ENCODE measurements at regions of chr22 and their contacts with region 1.

Region 1: GRCh38 chr22:21567456-21568346 is at the start of gene UBE2L3:
- DNase-seq: peak; percentile 88
- H3K4me3 ChIP-seq: peak within 1 kb of the TSS; percentile 90
- H3K27ac ChIP-seq: peak within 1 kb of the TSS; percentile 65
- H3K4me1 ChIP-seq: peaks cover 26% of the 10 kb centered on the region
- CTCF ChIP-seq: no peak
- total RNA-seq, gene UBE2L3: 61.2 and 63.8 TPM in 2 replicates

Region 2: GRCh38 chr22:21579518-21580147 is 11.9 kb after region 1 on chr22:
- CTCF ChIA-PET with region 1: interaction called, 3 read pairs
- POLR2A ChIA-PET with region 1: interaction called, 3 read pairs
- intact Hi-C with region 1: loop called (anchors 1 kb)
- DNase-seq: no peak
- H3K4me3 ChIP-seq: no peak overlapping the region
- H3K27ac ChIP-seq: no peak overlapping the region
- H3K4me1 ChIP-seq: peaks cover 41% of the 10 kb centered on the region
- CTCF ChIP-seq: no peak

Region 3: DNA sequence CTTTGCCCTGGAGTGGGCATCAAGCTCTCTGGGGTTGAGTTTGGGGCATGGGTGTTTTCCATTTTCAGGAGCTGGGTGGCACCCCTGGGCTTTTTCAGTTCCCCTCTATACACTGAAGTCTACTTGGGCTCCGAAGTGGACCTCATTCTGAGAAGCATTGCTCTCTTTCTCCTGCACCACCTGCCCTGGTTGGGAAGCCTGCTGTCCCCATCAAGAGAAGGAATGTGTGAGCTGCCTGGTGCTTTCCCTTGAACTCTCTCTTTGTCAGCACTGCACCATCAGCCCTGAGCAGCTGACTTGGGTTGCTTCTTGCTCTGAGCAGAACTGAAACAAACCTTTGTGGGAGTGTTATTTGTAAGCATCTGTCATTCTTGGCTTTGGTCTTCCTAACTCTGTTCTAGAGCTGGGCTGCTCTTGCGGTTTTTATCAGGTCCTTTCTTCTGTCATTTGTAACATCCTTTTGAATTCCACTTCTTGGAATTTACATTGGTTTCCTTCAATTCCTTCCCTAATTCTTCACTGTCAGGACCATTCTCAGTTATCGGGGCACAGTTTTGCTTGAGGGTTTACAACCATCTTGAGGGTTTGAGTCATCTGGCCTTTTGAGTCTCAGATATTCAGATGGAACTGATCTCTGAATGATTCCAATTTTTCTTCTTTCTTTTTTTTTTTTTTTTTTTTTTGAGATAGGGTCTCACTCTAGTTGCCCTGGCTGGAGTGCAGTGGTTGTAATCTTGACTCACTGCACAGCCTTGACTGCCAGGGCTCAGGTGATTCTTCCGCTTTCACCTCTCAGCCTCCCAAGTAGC is 20.3 kb after region 1 on chr22:
- CTCF ChIA-PET with region 1: interaction called, 3 read pairs
- POLR2A ChIA-PET with region 1: interaction called, 8 read pairs
- intact Hi-C with region 1: loop called (anchors 2 kb)
- DNase-seq: peak; percentile 76
- H3K4me3 ChIP-seq: peak overlapping the region; percentile 35
- H3K27ac ChIP-seq: peak overlapping the region; percentile 84
- H3K4me1 ChIP-seq: peaks cover 67% of the 10 kb centered on the region
- CTCF ChIP-seq: no peak

Region 4: DNA sequence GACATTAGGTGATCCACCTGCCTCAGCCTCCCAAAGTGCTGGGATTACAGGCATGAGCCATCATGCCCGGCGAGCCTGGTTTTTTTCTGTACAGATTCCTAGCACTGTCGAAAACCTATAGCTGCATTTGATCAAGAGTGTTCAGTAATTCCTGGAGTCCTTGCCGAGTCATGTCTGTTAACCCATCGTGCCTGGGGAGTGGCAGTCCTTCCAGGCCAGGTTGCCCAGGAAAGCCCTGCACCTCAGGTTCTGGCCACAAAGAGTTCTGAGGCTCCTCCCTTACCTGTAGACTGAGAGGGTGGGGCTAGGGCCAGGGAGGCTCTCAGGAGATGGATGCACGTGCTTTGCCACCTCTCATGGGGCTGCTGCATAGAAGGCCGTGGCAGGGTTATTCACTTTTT is 45.2 kb after region 1 on chr22:
- CTCF ChIA-PET with region 1: no interaction called
- POLR2A ChIA-PET with region 1: interaction called, 6 read pairs
- intact Hi-C with region 1: loop called (anchors 2 kb)
- DNase-seq: no peak
- H3K4me3 ChIP-seq: no peak overlapping the region
- H3K27ac ChIP-seq: no peak overlapping the region
- H3K4me1 ChIP-seq: peaks cover 42% of the 10 kb centered on the region
- CTCF ChIP-seq: no peak

Region 5: GRCh38 chr22:21816787-21817496 is 249.2 kb after region 1 on chr22:
- CTCF ChIA-PET with region 1: no interaction called
- POLR2A ChIA-PET with region 1: no interaction called
- intact Hi-C with region 1: no loop called
- DNase-seq: peak; percentile 86
- H3K4me3 ChIP-seq: peak overlapping the region; percentile 41
- H3K27ac ChIP-seq: peak overlapping the region; percentile 80
- H3K4me1 ChIP-seq: peaks cover 52% of the 10 kb centered on the region
- CTCF ChIP-seq: no peak